Activated CD4-positive, alpha-beta T cell treated with anti-CD3 and anti-CD28 coated beads, Interleukin-2, amount 10 ng/mL, durations not matched to agents 24 days and 14 days (primary cell): ENCODE measurements at regions of chr5 and their contacts with region 1.

Region 1: DNA sequence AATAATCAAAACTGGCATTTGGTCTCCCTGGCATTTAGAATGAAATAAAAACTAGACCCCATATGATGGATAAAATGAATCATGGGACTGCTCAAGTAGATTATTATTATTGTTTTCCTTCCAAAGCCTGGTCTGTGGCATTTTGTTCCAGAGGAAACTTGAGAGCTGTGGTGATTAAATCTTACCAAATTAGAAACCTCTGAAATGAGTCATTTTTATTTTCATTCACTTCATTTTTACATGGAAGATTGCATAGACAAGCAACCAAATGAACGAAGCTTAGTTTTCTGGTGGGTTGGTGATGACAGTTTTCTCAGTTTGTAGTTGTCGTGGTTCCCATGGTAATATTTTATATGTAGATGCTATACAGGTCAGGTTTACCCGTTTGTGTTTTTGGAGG is 23.4 kb downstream of the PAM start:
- DNase-seq: no peak
- H3K4me3 Mint-ChIP-seq: peak overlapping the region; percentile 47
- H3K27ac Mint-ChIP-seq: peak overlapping the region; percentile 89
- H3K4me1 Mint-ChIP-seq: peaks cover 54% of the 10 kb centered on the region
- H3K27me3 Mint-ChIP-seq: no peaks in the 10 kb centered on the region

Region 2: GRCh38 chr5:102747386-102748166 is 30.9 kb before region 1 on chr5:
- intact Hi-C with region 1: loop called (anchors 1 kb)
- DNase-seq: no peak
- H3K4me3 Mint-ChIP-seq: peak overlapping the region; percentile 15
- H3K27ac Mint-ChIP-seq: peak overlapping the region; percentile 22
- H3K4me1 Mint-ChIP-seq: peaks cover 11% of the 10 kb centered on the region
- H3K27me3 Mint-ChIP-seq: no peaks in the 10 kb centered on the region

Region 3: DNA sequence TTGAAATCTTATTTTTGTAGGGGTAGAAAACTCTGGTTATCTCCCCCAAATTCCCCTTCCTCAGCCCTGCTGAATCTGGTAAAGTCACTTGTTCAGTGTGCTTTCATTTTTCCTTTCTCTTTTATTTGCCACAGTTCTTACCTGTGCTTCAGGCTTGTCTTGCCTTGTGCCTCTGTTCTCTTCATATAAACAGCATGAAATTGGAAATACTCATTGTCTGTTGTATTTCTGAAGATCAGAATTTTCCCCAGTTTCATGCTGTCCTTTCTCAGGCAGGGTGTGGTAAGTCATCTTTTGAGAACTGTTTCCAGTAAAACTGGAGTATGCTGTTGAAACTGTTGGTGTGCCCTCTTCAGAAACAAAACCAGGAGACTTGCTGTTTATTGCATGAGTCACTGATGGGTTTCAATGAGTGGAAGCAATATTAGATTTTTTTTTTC is 16.4 kb before region 1 on chr5:
- intact Hi-C with region 1: loop called (anchors 1 kb)
- DNase-seq: peak; percentile 69
- H3K4me3 Mint-ChIP-seq: peak overlapping the region; percentile 82
- H3K27ac Mint-ChIP-seq: peak overlapping the region; percentile 90
- H3K4me1 Mint-ChIP-seq: peaks cover 68% of the 10 kb centered on the region
- H3K27me3 Mint-ChIP-seq: no peaks in the 10 kb centered on the region

Region 4: DNA sequence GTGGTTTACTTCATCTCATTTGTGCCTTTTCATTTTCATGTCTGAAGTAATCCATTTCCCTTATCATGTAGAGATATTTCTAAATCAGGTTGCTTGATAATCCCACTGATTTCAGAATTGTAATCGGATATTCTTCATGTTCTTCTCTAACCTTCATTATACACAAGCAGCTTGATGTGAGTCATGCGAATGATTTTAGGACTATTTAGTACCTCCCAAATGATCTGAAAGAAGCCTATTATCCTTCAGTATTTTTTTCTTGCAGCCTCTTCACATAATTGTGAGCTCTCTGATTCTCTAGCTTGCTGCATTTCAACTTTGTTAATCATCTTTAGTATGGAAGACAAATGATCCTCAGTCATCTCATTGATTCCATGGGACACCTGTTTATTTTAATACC is 159.4 kb after region 1 on chr5:
- intact Hi-C with region 1: loop called (anchors 5 kb)
- DNase-seq: no peak
- H3K4me3 Mint-ChIP-seq: no peak overlapping the region
- H3K27ac Mint-ChIP-seq: no peak overlapping the region
- H3K4me1 Mint-ChIP-seq: peaks cover 11% of the 10 kb centered on the region
- H3K27me3 Mint-ChIP-seq: no peaks in the 10 kb centered on the region

Region 5: DNA sequence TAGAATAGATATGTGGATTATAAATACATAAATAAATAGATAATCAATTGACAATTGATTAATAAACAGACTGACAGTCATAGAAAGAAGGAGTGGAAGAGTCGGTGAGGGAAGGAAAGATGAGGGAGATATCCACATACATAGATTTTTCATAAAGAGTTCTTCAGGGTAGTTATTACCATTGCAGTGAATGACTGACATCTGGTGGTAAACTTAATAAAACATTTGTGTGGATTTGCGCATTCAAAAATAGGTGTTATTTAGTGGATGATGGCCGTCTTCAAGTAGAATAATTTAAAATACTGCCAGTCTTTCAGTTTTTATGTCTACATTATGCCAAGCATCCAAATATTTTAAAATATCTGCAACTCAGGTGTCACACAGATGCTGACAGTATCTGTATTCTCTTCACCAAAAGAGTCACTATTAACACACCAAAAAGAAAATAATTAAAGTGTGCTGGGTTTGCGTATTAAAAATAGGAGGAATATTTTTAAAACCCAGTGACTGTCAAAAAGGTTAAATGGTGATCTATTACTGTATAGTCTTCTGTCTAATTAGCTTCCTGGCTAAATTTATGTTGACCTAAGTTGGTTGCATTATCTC is 262.7 kb after region 1 on chr5:
- intact Hi-C with region 1: loop called (anchors 5 kb)
- DNase-seq: no peak
- H3K4me3 Mint-ChIP-seq: no peak overlapping the region
- H3K27ac Mint-ChIP-seq: no peak overlapping the region
- H3K4me1 Mint-ChIP-seq: no peaks in the 10 kb centered on the region
- H3K27me3 Mint-ChIP-seq: peaks cover 25% of the 10 kb centered on the region

Region 6: DNA sequence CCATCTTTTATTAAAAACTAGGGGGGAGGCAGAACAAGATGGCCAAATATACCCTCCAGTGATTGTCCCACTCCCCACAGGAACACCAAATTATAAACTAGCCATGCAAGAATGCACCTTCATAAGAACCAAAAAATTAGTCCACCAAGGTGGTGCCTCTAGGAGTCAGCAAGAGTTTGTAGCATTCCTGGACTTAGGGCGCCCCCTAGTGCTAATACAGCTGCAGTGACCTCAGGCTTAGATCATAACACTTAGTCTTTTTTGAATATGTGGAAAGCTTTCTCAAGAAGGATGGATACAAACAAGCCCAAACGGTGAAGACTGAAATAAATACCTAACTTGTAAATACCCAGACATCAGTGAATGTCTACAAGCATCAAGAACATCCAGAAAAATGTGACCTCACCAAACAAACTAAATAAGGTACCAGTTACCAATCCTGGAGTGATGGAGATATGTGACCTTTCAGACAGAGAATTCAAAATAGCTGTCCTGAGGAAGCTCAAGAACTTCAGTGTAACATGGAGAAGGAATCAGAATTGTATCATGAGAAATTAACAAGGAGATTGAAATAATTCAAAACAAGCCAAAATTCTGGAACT is 360.9 kb after region 1 on chr5:
- intact Hi-C with region 1: loop called (anchors 1 kb)
- DNase-seq: peak; percentile 94
- H3K4me3 Mint-ChIP-seq: no peak overlapping the region
- H3K27ac Mint-ChIP-seq: no peak overlapping the region
- H3K4me1 Mint-ChIP-seq: peaks cover 4% of the 10 kb centered on the region
- H3K27me3 Mint-ChIP-seq: no peaks in the 10 kb centered on the region